Endothelial cell of umbilical vein (primary cell): ENCODE measurements at regions of chr21 and their contacts with region 1.

Region 1: DNA sequence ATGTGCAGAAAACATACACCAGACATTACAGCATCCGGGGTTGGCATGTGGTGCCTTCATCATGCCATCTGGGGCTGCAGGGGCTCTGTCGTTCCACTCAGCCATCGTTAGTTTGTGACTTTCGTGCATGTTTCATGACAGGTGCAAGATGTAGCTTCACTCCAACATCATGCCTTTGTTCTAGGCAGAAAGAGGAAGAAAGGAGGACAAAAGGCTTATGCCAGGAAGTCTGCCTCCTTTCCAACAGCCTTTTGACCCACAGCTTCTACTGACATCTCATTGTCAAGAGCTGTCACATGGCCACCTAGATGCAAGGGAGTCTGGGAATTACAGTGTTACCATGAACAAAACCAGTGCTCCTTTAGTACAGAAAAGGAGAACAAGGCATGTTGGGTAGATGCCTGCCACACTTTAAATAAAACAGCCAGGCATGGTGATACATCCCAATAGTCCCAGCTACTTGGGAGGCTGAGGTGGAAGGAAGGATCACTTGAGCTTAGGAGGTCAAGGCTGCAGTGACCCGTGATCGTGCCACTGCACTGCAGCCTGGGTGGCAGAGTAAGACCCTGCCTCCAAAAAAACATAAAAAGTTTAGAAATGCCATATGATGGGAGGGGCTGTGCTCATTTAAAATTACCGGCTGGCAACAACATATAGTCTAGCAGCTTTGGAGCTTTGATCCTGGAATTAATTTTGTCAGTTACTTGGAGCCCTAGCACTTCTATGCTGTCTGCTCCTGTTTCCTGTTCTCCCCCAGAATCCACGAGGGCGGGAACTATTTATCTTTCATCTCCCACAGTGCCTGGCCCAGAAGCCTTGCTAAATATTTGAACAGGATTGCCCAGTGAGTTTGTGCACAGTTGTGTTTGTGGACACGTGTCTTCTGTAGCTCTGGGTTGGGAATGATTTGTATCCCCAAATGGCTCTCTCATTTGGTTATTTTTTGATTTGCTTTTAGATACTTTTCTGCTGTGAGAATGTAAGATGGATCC is 7.4 kb downstream of the DOP1B start:
- DNase-seq: no peak
- H3K4me3 ChIP-seq: no peak overlapping the region
- H3K27ac ChIP-seq: no peak overlapping the region
- H3K4me1 ChIP-seq: no peaks in the 10 kb centered on the region
- H3K27me3 ChIP-seq: no peaks in the 10 kb centered on the region
- CTCF ChIP-seq: no peak
- POLR2A ChIP-seq: no peak

Region 2: GRCh38 chr21:36209626-36210171 is 45.7 kb after region 1 on chr21:
- CTCF ChIA-PET with region 1: interaction called, 10 read pairs
- POLR2A ChIA-PET with region 1: no interaction called
- dilution Hi-C with region 1: no loop called
- intact Hi-C with region 1: no loop called
- DNase-seq: peak; percentile 42
- H3K4me3 ChIP-seq: no peak overlapping the region
- H3K27ac ChIP-seq: peak overlapping the region; percentile 10
- H3K4me1 ChIP-seq: peaks cover 11% of the 10 kb centered on the region
- H3K27me3 ChIP-seq: no peaks in the 10 kb centered on the region
- CTCF ChIP-seq: peak; percentile 42 to 45
- POLR2A ChIP-seq: no peak

Region 3: GRCh38 chr21:36450511-36450910 is 286.5 kb after region 1 on chr21:
- CTCF ChIA-PET with region 1: no interaction called
- POLR2A ChIA-PET with region 1: no interaction called
- dilution Hi-C with region 1: no loop called
- intact Hi-C with region 1: no loop called
- DNase-seq: peak; percentile 57
- H3K4me3 ChIP-seq: no peak overlapping the region
- H3K27ac ChIP-seq: peak overlapping the region; percentile 61
- H3K4me1 ChIP-seq: peaks cover 32% of the 10 kb centered on the region
- H3K27me3 ChIP-seq: no peaks in the 10 kb centered on the region
- CTCF ChIP-seq: no peak
- POLR2A ChIP-seq: no peak